ENCODE measurements at regions of chr19 and their contacts with region 1.

Region 1: GRCh38 chr19:35135389-35135909 is 590 bp upstream of the LGI4 start:
- DNase-seq: peak; percentile 80 to 85
- ATAC-seq: peak; percentile 48 to 65 (median 55)
- H3K4me3 ChIP-seq: peak overlapping the region in 9 of 10 donors; percentile 12 to 48 (median 33)
- H3K27ac ChIP-seq: peak overlapping the region; percentile 17 to 80 (median 68)
- H3K4me1 ChIP-seq: peaks cover 6 to 48% (median 29%) of the 10 kb centered on the region in 9 donors
- H3K27me3 ChIP-seq: peaks cover 0 to 7% (median 0%) of the 10 kb centered on the region in 7 donors
- CTCF ChIP-seq: peak; percentile 77 to 99 (median 94)

Region 2: DNA sequence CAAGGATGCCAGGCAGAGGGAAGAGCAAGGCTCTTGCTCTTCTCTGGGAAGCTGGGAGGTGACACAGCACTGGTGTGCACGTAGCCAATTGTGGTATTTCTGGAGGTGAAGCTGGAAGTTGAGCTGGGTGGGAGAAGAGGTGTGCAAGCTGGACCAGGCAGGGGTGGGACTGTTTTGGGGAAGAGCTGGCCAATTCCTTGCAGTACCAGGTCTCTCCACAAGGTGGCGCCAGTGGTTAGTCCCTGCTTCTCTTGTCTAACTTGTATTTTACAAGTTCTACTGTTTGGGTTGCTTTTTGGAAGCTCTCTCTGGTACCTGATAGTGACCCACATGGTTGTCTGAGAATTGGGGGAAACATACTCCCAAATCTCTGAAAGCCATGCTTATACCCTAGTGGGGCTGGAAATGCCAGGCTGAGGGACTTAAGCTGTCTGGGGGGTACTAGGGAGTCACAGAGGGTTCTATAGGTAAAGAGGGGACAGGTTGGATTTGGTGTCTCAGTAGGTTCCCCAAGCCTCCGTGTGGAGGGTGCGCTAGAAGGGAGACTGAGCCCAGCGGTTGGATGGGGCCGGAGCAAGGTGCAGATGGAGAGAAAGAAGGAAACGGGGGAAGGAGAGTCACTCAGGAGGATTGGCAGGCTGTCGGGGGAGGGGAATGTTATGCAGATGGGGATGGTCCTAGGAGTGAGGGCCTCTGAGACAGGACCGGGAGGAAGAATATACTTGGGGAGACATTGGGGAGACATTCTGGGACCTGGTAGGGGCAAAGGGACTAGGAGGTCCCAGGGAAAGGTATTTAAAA is 90.9 kb before region 1 on chr19:
- intact Hi-C with region 1: no loop called
- DNase-seq: peak; percentile 55 to 67
- ATAC-seq: no peak
- H3K4me3 ChIP-seq: no peak overlapping the region
- H3K27ac ChIP-seq: no peak overlapping the region
- H3K4me1 ChIP-seq: peaks cover 10 to 54% (median 32%) of the 10 kb centered on the region in 9 donors
- H3K27me3 ChIP-seq: peaks cover 0 to 7% (median 0%) of the 10 kb centered on the region in 7 donors
- CTCF ChIP-seq: peak; percentile 90 to 99 (median 97)

Region 3: GRCh38 chr19:35114353-35115176 is 20.9 kb before region 1 on chr19:
- intact Hi-C with region 1: loop called in 4 of 10 experiments (anchors 1 to 2 kb)
- DNase-seq: peak; percentile 63 to 79
- ATAC-seq: peak; percentile 74 to 85 (median 78)
- H3K4me3 ChIP-seq: peak overlapping the region in 9 of 10 donors; percentile 12 to 45 (median 36)
- H3K27ac ChIP-seq: peak overlapping the region in 2 of 10 donors; percentile 0 to 4
- H3K4me1 ChIP-seq: peaks cover 4 to 21% (median 12%) of the 10 kb centered on the region in 9 donors
- H3K27me3 ChIP-seq: peaks cover 0 to 3% (median 0%) of the 10 kb centered on the region in 7 donors
- CTCF ChIP-seq: peak; percentile 95 to 99 (median 97)

Region 4: GRCh38 chr19:35204799-35205732 is 69.6 kb after region 1 on chr19:
- intact Hi-C with region 1: no loop called
- DNase-seq: peak in 1 of 2 donors; percentile 33
- ATAC-seq: peak in 6 of 8 donors; percentile 26 to 65 (median 44)
- H3K4me3 ChIP-seq: no peak overlapping the region
- H3K27ac ChIP-seq: peak overlapping the region in 1 of 10 donors; percentile 70
- H3K4me1 ChIP-seq: peaks cover 0 to 31% (median 0%) of the 10 kb centered on the region in 9 donors
- H3K27me3 ChIP-seq: no peaks in the 10 kb centered on the region
- CTCF ChIP-seq: no peak